Dendritic cell treated with granulocyte-macrophage colony-stimulating factor and Interleukin-4, amounts not matched to agents 40 ng/mL and 50 ng/mL, for 4 days (primary cell): ENCODE measurements at regions of chr2 and their contacts with region 1.

Region 1: DNA sequence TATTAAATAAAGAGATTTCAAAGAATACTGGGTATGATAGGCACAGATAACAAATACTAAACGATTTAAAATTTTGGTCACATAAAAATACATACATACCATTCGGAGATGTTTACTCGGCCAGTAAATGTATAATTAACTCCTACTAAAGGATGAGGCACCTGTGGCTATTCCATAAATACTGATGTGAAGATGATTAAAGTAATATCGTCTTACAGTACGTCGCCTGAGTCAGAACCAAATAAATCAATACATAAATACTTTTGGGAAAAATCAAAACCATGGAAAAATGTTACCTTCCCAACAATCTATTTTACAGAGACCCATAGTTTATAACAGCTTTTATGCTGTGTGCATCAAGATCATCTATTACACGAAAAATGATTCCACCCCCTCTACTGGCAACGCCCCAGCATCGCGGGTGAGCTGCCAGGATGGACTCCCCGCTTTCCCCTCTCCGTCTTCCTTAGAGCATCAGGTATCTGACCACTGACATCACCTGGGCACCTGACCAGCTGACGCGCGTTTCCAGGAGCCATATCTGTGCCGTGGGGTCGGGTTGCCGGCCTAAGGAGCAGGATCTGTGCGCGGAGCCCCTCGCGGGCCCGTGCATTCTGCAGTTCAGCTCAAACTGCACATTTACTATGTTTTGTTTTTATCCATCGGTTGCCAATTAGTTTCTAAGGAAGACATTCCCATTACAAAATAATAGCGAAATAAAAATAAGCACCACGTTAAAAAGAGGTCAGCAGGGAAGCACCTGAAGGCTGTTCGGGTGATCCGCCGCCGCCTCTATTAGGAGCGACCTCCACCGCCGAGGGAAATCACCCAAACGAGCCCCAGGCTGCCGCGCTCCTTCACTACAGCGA is 901 bp downstream of the ICA1L start:
- H3K4me3 Mint-ChIP-seq: peak overlapping the region; percentile 85
- H3K27ac Mint-ChIP-seq: peak overlapping the region; percentile 66
- H3K4me1 Mint-ChIP-seq: peaks cover 9% of the 10 kb centered on the region
- H3K27me3 Mint-ChIP-seq: peaks cover 8% of the 10 kb centered on the region

Region 2: GRCh38 chr2:202574541-202574940 is 296.1 kb before region 1 on chr2:
- intact Hi-C with region 1: loop called (anchors 1 kb)
- H3K4me3 Mint-ChIP-seq: no peak overlapping the region
- H3K27ac Mint-ChIP-seq: no peak overlapping the region
- H3K4me1 Mint-ChIP-seq: no peaks in the 10 kb centered on the region
- H3K27me3 Mint-ChIP-seq: no peaks in the 10 kb centered on the region

Region 3: GRCh38 chr2:202588647-202589581 is 281.8 kb before region 1 on chr2:
- intact Hi-C with region 1: loop called (anchors 5 kb)
- H3K4me3 Mint-ChIP-seq: peak overlapping the region; percentile 39
- H3K27ac Mint-ChIP-seq: peak overlapping the region; percentile 66
- H3K4me1 Mint-ChIP-seq: peaks cover 20% of the 10 kb centered on the region
- H3K27me3 Mint-ChIP-seq: no peaks in the 10 kb centered on the region

Region 4: GRCh38 chr2:202831242-202832220 is 39.1 kb before region 1 on chr2:
- intact Hi-C with region 1: loop called (anchors 1 kb)
- H3K4me3 Mint-ChIP-seq: no peak overlapping the region
- H3K27ac Mint-ChIP-seq: no peak overlapping the region
- H3K4me1 Mint-ChIP-seq: peaks cover 10% of the 10 kb centered on the region
- H3K27me3 Mint-ChIP-seq: no peaks in the 10 kb centered on the region

Region 5: DNA sequence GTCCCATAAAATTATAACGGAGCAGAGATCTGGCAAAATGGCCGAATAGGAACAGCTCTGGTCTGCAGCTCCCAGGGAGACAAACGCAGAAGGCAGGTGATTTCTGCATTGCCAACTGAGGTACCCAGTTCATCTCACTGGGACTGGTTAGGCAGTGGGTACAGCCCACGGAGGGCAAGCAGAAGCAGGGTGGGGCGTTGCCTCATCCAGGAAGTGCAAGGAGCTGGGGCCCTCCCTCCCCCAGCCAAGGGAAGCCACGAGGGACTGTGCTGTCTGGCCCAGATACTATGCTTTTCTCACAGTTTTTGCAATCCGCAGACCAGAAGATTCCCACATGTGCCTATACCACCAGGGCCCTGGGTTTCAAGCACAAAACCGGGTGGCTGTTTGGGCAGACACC is 21.9 kb before region 1 on chr2:
- intact Hi-C with region 1: loop called (anchors 2 kb)
- H3K4me3 Mint-ChIP-seq: no peak overlapping the region
- H3K27ac Mint-ChIP-seq: peak overlapping the region; percentile 89
- H3K4me1 Mint-ChIP-seq: peaks cover 45% of the 10 kb centered on the region
- H3K27me3 Mint-ChIP-seq: no peaks in the 10 kb centered on the region

Region 6: DNA sequence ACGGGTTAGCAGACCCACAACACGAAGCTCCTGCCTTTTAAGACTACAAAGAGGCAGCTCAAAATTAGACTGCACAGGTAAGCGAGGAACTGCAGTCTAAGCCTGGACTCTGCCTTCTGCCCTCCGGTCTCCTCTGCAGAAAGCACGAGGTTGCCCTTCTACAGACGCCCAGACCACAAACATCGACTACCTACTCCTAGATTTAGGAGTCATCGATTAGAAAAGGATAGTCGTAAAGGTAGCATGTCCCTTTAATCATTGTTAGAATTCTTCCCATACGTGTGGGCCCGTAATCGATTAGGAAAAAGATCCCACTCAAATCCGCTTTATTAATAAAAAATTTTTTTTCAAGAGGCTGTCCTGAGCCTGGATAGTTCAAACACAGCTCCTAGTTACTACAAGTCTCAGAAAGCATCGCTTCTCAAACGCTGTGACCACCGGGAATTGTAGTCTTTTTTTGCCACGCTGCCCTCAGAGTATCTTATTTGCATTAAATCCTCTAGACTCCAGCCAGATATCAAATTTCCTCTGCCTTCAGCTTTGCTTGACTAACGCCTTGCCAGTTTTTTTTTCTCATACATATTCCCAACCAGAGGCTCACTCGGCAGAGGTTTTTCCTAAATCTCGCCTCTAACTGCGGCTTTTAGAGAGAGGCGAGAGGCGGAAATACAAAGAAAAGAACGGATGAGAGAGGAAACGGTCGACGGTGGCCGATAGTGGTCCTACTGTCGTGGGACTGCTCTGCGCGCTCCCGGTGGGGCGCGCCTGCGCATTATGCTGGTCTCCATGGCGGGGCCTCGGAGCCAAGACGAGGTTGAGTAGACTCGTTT is 41.1 kb after region 1 on chr2 and contains the starts of genes CARF and WDR12:
- intact Hi-C with region 1: loop called (anchors 5 kb)
- H3K4me3 Mint-ChIP-seq: peak within 1 kb of the TSS; percentile 98
- H3K27ac Mint-ChIP-seq: peak within 1 kb of the TSS; percentile 87
- H3K4me1 Mint-ChIP-seq: peaks cover 23% of the 10 kb centered on the region
- H3K27me3 Mint-ChIP-seq: no peaks in the 10 kb centered on the region